ENCODE measurements at regions of chr5 and their contacts with region 1.

Region 1: GRCh38 chr5:141618804-141619554 is at the start of gene DIAPH1:
- DNase-seq: peak; percentile 96 to 99 (median 97)
- H3K4me3 ChIP-seq: peak within 1 kb of the TSS; percentile 98
- H3K4me3 Mint-ChIP-seq: peak within 1 kb of the TSS; percentile 95 to 100 (median 97)
- H3K27ac ChIP-seq: peak within 1 kb of the TSS; percentile 82
- H3K27ac Mint-ChIP-seq: peak within 1 kb of the TSS; percentile 91 to 99 (median 94)
- H3K4me1 ChIP-seq: peaks cover 38% of the 10 kb centered on the region
- H3K4me1 Mint-ChIP-seq: peaks cover 37 to 46% (median 41%) of the 10 kb centered on the region in 3 donors
- H3K27me3 ChIP-seq: no peaks in the 10 kb centered on the region
- H3K27me3 Mint-ChIP-seq: no peaks in the 10 kb centered on the region
- total RNA-seq, gene DIAPH1: 212 to 217 TPM

Region 2: DNA sequence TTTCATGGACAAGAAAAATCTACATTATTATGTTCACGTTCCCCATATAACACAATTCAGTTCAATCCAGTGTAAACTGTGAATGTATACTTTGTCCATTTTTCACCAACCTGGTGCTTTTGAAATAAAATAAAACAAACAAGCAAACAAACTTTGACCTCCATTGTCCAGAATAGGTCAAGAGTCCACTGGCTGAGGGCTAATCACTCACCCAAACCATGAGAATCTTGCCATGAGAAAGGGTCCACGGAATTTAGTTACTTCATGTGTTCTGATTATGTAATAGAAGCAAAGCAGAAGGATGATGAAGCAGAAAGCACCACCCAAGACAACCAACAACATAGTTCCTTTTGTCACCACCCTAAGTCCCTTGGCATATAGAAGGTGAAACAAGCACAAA is 28.9 kb before region 1 on chr5:
- CTCF ChIA-PET with region 1: interaction called, 318 read pairs
- POLR2A ChIA-PET with region 1: interaction called, 67 read pairs
- DNase-seq: no peak
- H3K4me3 ChIP-seq: no peak overlapping the region
- H3K4me3 Mint-ChIP-seq: no peak overlapping the region
- H3K27ac ChIP-seq: no peak overlapping the region
- H3K27ac Mint-ChIP-seq: peak overlapping the region in 4 of 8 donors; percentile 27 to 72 (median 57)
- H3K4me1 ChIP-seq: peaks cover 20% of the 10 kb centered on the region
- H3K4me1 Mint-ChIP-seq: peaks cover 48 to 70% (median 70%) of the 10 kb centered on the region in 3 donors
- H3K27me3 ChIP-seq: no peaks in the 10 kb centered on the region
- H3K27me3 Mint-ChIP-seq: no peaks in the 10 kb centered on the region

Region 3: GRCh38 chr5:141598391-141599350 is 20.3 kb before region 1 on chr5:
- CTCF ChIA-PET with region 1: interaction called, 318 read pairs
- POLR2A ChIA-PET with region 1: interaction called, 70 read pairs
- DNase-seq: no peak
- H3K4me3 ChIP-seq: no peak overlapping the region
- H3K4me3 Mint-ChIP-seq: peak overlapping the region in 6 of 7 donors; percentile 63 to 72 (median 71)
- H3K27ac ChIP-seq: no peak overlapping the region
- H3K27ac Mint-ChIP-seq: peak overlapping the region; percentile 82 to 97 (median 90)
- H3K4me1 ChIP-seq: peaks cover 69% of the 10 kb centered on the region
- H3K4me1 Mint-ChIP-seq: peaks cover 74 to 89% (median 88%) of the 10 kb centered on the region in 3 donors
- H3K27me3 ChIP-seq: no peaks in the 10 kb centered on the region
- H3K27me3 Mint-ChIP-seq: no peaks in the 10 kb centered on the region

Region 4: DNA sequence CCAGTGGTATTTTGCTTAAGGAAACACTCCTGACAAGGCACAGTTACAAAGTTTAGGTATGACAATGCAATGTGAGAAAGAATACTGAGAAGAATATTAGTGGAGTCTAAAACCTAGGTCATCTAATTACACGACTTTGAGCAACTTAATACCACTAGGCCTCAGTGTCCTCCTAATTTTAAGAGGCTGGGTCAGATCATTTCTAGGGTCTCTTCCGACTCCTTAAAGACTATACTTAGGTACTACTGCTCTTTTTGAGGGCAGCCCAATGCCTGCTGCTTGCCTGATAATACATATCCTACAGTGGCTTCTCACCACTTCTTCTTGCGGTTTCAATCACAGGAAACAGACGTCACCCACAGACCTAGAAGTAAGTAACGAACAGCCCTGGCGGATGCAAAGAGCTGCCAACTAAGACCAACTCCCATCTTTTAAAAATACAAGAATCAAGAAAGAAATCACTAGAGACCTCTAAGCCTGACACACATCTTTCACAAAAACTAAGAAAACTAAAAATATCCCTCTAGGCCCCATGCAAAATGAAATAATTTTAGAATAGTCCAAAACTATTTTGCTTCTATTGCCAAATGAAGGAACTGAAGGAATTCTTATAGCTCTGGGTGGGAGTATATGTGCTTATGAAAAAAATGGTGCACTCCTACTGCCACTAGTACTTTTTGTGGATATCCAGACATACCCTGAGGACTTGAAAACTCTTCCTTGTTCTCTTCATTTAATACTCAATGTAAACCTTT is 13.3 kb before region 1 on chr5:
- CTCF ChIA-PET with region 1: interaction called, 175 read pairs
- POLR2A ChIA-PET with region 1: interaction called, 70 read pairs
- DNase-seq: peak; percentile 54 to 88 (median 85)
- H3K4me3 ChIP-seq: peak overlapping the region; percentile 33
- H3K4me3 Mint-ChIP-seq: peak overlapping the region; percentile 66 to 82 (median 77)
- H3K27ac ChIP-seq: peak overlapping the region; percentile 67
- H3K27ac Mint-ChIP-seq: peak overlapping the region; percentile 77 to 99 (median 92)
- H3K4me1 ChIP-seq: peaks cover 90% of the 10 kb centered on the region
- H3K4me1 Mint-ChIP-seq: peaks cover 89 to 96% (median 96%) of the 10 kb centered on the region in 3 donors
- H3K27me3 ChIP-seq: no peaks in the 10 kb centered on the region
- H3K27me3 Mint-ChIP-seq: no peaks in the 10 kb centered on the region

Region 5: DNA sequence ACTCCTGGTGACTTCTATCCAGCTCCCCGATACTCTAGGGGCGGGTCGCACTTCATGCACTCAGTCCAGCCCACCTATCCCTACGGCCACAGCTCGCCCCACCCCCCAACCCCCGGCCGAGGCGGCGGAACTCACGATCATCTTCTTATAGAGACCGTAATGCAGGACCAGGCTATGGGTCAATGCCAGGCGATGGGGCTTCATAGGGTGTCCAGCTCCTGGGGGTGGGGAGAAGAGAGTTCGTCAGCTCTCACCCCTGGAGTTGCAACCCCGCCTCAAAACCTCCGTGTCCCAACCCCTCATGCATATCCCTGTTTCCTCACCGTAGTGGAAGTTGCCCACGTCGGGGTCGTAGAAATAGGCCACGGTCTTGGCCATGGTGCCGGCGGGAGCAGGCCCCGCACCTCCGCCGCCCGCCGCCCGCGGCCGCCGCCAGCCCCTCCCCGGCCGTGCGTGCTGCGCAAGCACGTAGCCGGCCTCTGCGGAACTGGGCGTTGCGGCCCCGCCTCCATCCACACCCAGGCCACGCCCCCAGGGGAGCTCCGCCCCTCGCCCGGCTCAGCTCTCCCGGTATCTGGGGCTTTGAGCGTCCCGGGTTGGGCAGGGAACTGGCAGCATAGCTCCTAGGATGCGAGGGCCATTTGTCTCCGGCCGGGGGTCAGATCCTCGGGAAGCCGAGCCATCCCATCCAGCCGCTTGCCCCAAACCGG is 17.6 kb after region 1 on chr5 and contains the starts of genes HDAC3 and RELL2:
- CTCF ChIA-PET with region 1: interaction called, 119 read pairs
- POLR2A ChIA-PET with region 1: interaction called, 25 read pairs
- DNase-seq: peak; percentile 89 to 94 (median 91)
- H3K4me3 ChIP-seq: peak within 1 kb of the TSS; percentile 97
- H3K4me3 Mint-ChIP-seq: peak within 1 kb of the TSS; percentile 92 to 96 (median 94)
- H3K27ac ChIP-seq: peak within 1 kb of the TSS; percentile 85
- H3K27ac Mint-ChIP-seq: peak within 1 kb of the TSS; percentile 90 to 98 (median 93)
- H3K4me1 ChIP-seq: peaks cover 35% of the 10 kb centered on the region
- H3K4me1 Mint-ChIP-seq: peaks cover 32 to 55% (median 50%) of the 10 kb centered on the region in 3 donors
- H3K27me3 ChIP-seq: no peaks in the 10 kb centered on the region
- H3K27me3 Mint-ChIP-seq: peaks cover 0 to 1% of the 10 kb centered on the region in 2 donors
- total RNA-seq, gene HDAC3: 74.8 to 78.6 TPM
- total RNA-seq, gene RELL2: 24.8 to 26.2 TPM

Measured in CD8-positive, alpha-beta memory T cell (primary cell).